ENCODE measurements at regions of chr1 and their contacts with region 1.

Region 1: GRCh38 chr1:116737020-116737854 is 17.0 kb upstream of the CD2 start:
- DNase-seq: peak; percentile 66
- ATAC-seq: peak; percentile 62
- H3K4me3 ChIP-seq: no peak overlapping the region
- H3K27ac ChIP-seq: peak overlapping the region; percentile 97
- H3K4me1 ChIP-seq: peaks cover 39% of the 10 kb centered on the region
- H3K27me3 ChIP-seq: no peaks in the 10 kb centered on the region
- CTCF ChIP-seq: peak; percentile 88 to 95 (median 93); a peak in 5 of 6 replicates
- EP300 ChIP-seq: no peak
- POLR2A ChIP-seq: peak; percentile 51; the same call in 1 of the 2 replicates
- RAD21 ChIP-seq: peak; percentile 95

Region 2: GRCh38 chr1:116754198-116754977 is 17.2 kb after region 1 on chr1 and contains the start of gene CD2:
- CTCF ChIA-PET with region 1: interaction called, 8 read pairs
- POLR2A ChIA-PET with region 1: interaction called, 5 read pairs
- RAD21 ChIA-PET with region 1: interaction called, 9 read pairs
- SMC1A ChIA-PET with region 1: interaction called, 18 read pairs
- in situ Hi-C with region 1: no loop called
- intact Hi-C with region 1: no loop called
- DNase-seq: no peak
- ATAC-seq: no peak; the same call in 2 of the 3 replicates
- H3K4me3 ChIP-seq: no peak within 1 kb of the TSS
- H3K27ac ChIP-seq: no peak within 1 kb of the TSS
- H3K4me1 ChIP-seq: no peaks in the 10 kb centered on the region
- H3K27me3 ChIP-seq: no peaks in the 10 kb centered on the region
- CTCF ChIP-seq: no peak
- EP300 ChIP-seq: no peak
- POLR2A ChIP-seq: no peak
- RAD21 ChIP-seq: no peak
- polyA plus RNA-seq, gene CD2: 3.0 to 4.3 TPM

Region 3: DNA sequence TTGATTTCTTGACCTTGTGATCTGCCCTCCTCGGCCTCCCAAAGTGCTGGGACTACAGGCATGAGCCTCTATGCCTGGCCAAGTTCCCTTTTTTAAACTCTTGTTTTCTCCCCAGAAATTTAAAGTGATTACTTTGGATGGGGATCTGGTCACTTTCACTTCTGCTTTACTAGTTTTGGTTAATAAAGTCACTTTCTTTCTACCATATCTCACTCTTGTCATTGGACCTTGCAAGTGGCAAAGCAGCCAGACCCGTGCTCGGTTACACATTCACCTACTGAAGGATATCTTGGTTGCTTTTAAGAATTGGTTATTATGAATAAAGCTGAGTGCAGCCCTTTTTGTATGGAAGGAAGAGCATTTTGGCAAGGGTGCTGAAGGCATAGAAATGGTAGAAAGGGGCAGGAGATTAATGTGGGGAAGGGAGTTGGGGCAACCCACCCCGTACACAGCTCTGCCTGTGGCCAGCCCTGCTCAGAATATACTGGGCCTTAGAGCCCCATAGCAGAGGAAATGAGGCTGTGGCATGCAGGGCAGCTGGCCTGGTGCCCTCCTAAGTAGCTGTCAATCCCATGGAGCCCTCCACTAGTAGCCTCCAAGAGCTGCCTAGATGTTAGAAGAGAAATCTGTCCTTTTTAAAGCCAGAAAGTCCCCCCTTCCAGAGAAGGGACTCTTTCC is 57.7 kb after region 1 on chr1:
- CTCF ChIA-PET with region 1: interaction called, 35 read pairs
- POLR2A ChIA-PET with region 1: interaction called, 4 read pairs
- RAD21 ChIA-PET with region 1: interaction called, 45 read pairs
- SMC1A ChIA-PET with region 1: interaction called, 43 read pairs
- in situ Hi-C with region 1: no loop called
- intact Hi-C with region 1: loop called (anchors 1 kb)
- DNase-seq: peak; percentile 87
- ATAC-seq: peak; percentile 96
- H3K4me3 ChIP-seq: peak overlapping the region; percentile 14; the same call in 1 of the 2 replicates
- H3K27ac ChIP-seq: peak overlapping the region; percentile 57
- H3K4me1 ChIP-seq: peaks cover 11% of the 10 kb centered on the region
- H3K27me3 ChIP-seq: no peaks in the 10 kb centered on the region
- CTCF ChIP-seq: no peak
- EP300 ChIP-seq: peak; percentile 71 to 87
- POLR2A ChIP-seq: no peak
- RAD21 ChIP-seq: no peak

Region 4: GRCh38 chr1:116833718-116834117 is 96.5 kb after region 1 on chr1:
- CTCF ChIA-PET with region 1: interaction called, 50 read pairs
- POLR2A ChIA-PET with region 1: no interaction called
- RAD21 ChIA-PET with region 1: interaction called, 12 read pairs
- SMC1A ChIA-PET with region 1: interaction called, 14 read pairs
- in situ Hi-C with region 1: no loop called
- intact Hi-C with region 1: no loop called
- DNase-seq: no peak
- ATAC-seq: no peak
- H3K4me3 ChIP-seq: no peak overlapping the region
- H3K27ac ChIP-seq: no peak overlapping the region
- H3K4me1 ChIP-seq: no peaks in the 10 kb centered on the region
- H3K27me3 ChIP-seq: no peaks in the 10 kb centered on the region; a peak in 1 of 4 replicates
- CTCF ChIP-seq: no peak
- EP300 ChIP-seq: no peak
- POLR2A ChIP-seq: no peak
- RAD21 ChIP-seq: no peak

Region 5: GRCh38 chr1:116881879-116882520 is 144.8 kb after region 1 on chr1:
- CTCF ChIA-PET with region 1: interaction called, 82 read pairs
- POLR2A ChIA-PET with region 1: interaction called, 7 read pairs
- RAD21 ChIA-PET with region 1: interaction called, 138 read pairs
- SMC1A ChIA-PET with region 1: interaction called, 146 read pairs
- in situ Hi-C with region 1: no loop called
- intact Hi-C with region 1: loop called (anchors 1 kb)
- DNase-seq: no peak
- ATAC-seq: peak; percentile 69
- H3K4me3 ChIP-seq: no peak overlapping the region
- H3K27ac ChIP-seq: no peak overlapping the region
- H3K4me1 ChIP-seq: peaks cover 14% of the 10 kb centered on the region; the same call in 1 of the 2 replicates
- H3K27me3 ChIP-seq: no peaks in the 10 kb centered on the region
- CTCF ChIP-seq: peak; percentile 45 to 73 (median 65)
- EP300 ChIP-seq: no peak
- POLR2A ChIP-seq: no peak
- RAD21 ChIP-seq: peak; percentile 79

Region 6: GRCh38 chr1:117051224-117052064 is 314.2 kb after region 1 on chr1:
- CTCF ChIA-PET with region 1: interaction called, 54 read pairs
- POLR2A ChIA-PET with region 1: interaction called, 24 read pairs
- RAD21 ChIA-PET with region 1: interaction called, 81 read pairs
- SMC1A ChIA-PET with region 1: interaction called, 91 read pairs
- in situ Hi-C with region 1: loop called (anchors 5 kb)
- intact Hi-C with region 1: no loop called
- DNase-seq: peak; percentile 34
- ATAC-seq: peak; percentile 93
- H3K4me3 ChIP-seq: peak overlapping the region; percentile 61; the same call in 1 of the 2 replicates
- H3K27ac ChIP-seq: peak overlapping the region; percentile 89
- H3K4me1 ChIP-seq: peaks cover 13% of the 10 kb centered on the region
- H3K27me3 ChIP-seq: no peaks in the 10 kb centered on the region
- CTCF ChIP-seq: no peak
- EP300 ChIP-seq: no peak; a peak in 1 of 4 replicates
- POLR2A ChIP-seq: peak; percentile 55
- RAD21 ChIP-seq: peak; percentile 2; the same call in 1 of the 2 replicates

Measured in GM12878 (cell line).